ENCODE measurements at regions of chr2 and their contacts with region 1.

Region 1: GRCh38 chr2:26299471-26300101 is 46.4 kb upstream of the SELENOI start:
- DNase-seq: no peak
- ATAC-seq: no peak
- H3K4me3 ChIP-seq: peak overlapping the region; percentile 56 to 68 (median 64)
- H3K27ac ChIP-seq: peak overlapping the region; percentile 49 to 69 (median 58)
- H3K4me1 ChIP-seq: peaks cover 3 to 9% of the 10 kb centered on the region in 2 donors
- H3K27me3 ChIP-seq: no peaks in the 10 kb centered on the region
- CTCF ChIP-seq: no peak
- POLR2A ChIP-seq: no peak

Region 2: DNA sequence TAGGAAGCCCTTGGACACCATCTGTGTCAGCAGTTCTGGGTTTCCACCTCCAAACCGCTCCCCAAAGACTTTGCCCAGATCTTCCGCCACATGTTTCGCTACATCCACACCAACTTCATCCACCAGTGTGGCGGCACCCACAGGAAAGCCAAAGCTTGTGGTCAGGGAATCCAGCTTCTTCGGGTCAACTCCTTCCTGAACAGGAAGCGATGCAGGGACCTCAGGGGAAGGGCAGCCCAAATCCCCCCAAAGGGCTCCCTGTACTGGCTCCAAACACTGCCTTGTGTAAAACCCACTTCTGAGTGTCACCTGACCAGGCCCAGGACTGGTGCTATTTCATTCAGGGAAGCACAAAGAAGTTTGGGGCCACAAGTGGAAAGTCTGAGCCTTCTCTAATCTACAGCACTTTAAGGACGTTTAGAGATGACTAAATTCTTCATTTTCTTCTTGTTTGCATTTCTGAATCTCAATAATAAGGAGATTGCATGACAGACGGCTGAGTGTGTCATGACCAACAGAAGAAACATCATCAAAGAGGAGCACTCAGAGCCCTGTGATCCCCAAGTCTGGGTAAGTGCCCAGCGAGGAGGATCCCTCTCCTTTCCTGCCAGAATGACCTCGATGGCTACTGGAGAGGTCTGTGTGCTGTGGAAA is 105.9 kb before region 1 on chr2:
- in situ Hi-C with region 1: no loop called
- intact Hi-C with region 1: loop called (anchors 5 kb)
- DNase-seq: no peak
- ATAC-seq: no peak
- H3K4me3 ChIP-seq: no peak overlapping the region
- H3K27ac ChIP-seq: no peak overlapping the region
- H3K4me1 ChIP-seq: peaks cover 4 to 13% of the 10 kb centered on the region in 2 donors
- H3K27me3 ChIP-seq: no peaks in the 10 kb centered on the region
- CTCF ChIP-seq: no peak
- POLR2A ChIP-seq: no peak